ENCODE measurements at regions of chr10 and their contacts with region 1.

Region 1: DNA sequence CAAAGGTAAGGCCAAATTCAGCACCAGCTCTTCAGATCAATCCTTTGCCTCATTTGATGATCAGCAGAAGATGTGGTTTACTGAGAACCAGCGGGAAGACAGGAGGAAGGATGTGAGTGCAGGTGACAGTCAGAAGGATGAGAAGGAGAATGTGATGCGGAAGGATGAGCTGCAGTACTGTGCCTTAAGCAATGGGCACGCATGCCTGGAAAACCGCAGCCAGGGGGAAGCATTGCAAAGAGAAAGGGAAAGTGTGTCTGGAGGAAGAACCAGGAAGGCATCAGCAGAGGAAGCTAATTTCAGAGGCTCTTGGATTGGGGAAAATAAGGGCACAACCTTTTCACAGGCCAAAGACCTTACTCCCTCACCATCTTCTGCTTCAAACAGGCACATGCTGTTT is 25.7 kb downstream of the C10orf71 start:
- DNase-seq: peak in 2 of 3 donors; percentile 59 to 71
- H3K4me3 ChIP-seq: no peak overlapping the region
- H3K4me3 Mint-ChIP-seq: peak overlapping the region in 1 of 2 donors; percentile 1
- H3K27ac ChIP-seq: peak overlapping the region in 1 of 2 donors; percentile 7
- H3K27ac Mint-ChIP-seq: peak overlapping the region in 2 of 7 donors; percentile 0 to 10
- H3K4me1 ChIP-seq: peaks cover 20 to 41% of the 10 kb centered on the region in 2 donors
- H3K4me1 Mint-ChIP-seq: peaks cover 43% of the 10 kb centered on the region
- H3K27me3 ChIP-seq: no peaks in the 10 kb centered on the region
- H3K27me3 Mint-ChIP-seq: peaks cover 2 to 17% (median 4%) of the 10 kb centered on the region in 3 donors
- CTCF ChIP-seq: no peak

Region 2: DNA sequence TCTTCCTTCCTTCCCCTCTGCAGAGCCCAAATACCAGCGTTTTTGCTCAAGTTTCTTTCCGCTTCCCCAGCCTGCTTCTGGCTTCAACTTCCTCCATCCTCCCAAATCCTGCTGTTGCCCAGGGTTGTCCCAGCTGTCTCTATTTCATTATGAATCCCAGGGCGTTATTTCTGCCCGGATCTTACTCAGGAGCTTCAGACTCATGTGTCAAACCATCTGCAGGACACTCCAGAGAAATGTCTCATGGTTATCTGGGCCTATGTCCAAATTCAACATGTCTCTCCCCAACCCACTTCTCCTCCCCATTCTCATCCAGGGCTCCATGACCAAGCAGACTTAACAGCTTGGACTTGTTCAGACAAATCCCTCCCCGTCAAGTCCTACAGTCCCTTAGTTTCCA is 735.4 kb before region 1 on chr10:
- intact Hi-C with region 1: no loop called
- DNase-seq: no peak
- H3K4me3 ChIP-seq: no peak overlapping the region
- H3K4me3 Mint-ChIP-seq: no peak overlapping the region
- H3K27ac ChIP-seq: no peak overlapping the region
- H3K27ac Mint-ChIP-seq: peak overlapping the region in 1 of 7 donors; percentile 10
- H3K4me1 ChIP-seq: peaks cover 0 to 13% of the 10 kb centered on the region in 2 donors
- H3K4me1 Mint-ChIP-seq: peaks cover 6% of the 10 kb centered on the region
- H3K27me3 ChIP-seq: no peaks in the 10 kb centered on the region
- H3K27me3 Mint-ChIP-seq: peaks cover 2 to 4% (median 3%) of the 10 kb centered on the region in 3 donors
- CTCF ChIP-seq: no peak

Region 3: DNA sequence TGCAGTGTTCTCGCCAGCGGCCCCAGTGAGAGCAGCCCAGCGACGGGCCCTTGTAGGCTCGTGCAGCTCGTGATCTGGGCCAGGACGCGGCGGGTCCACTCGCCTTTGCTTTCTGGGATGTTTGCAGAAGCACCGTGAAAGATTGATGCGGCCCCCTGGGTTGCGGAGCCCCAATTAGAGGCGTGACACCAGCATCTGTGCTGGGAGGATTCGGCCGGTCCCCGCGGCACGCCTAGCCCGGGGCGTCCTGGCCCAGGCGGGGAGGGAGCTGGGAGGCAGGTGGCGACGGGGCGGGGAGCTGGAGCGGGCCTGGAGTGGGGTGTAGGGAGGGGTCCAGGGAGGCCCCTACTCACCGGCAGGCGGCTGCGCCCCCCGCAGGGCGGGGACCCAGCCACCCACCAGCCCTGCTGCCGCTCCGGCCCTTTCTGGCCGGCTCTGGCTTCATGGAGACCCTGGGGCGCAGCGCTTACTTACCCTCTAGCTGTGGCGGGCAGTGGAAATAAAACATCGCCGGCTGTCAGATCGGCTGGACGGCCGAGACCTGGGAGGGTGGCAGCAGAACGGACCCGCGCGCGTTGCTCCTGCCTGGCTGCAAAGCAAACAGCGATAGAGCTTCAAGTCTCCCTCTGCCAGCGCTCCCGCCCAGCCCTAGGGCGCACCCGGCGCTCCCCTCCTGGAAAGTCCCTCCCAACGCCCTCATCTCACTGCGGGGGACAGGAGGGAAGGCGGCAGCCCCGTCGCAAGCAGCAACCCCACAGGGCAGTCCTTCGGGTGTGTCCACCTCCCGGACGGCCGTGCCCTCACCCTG is 70.4 kb after region 1 on chr10:
- intact Hi-C with region 1: loop called in 1 of 2 experiments (anchors 5 kb)
- DNase-seq: no peak
- H3K4me3 ChIP-seq: no peak overlapping the region
- H3K4me3 Mint-ChIP-seq: peak overlapping the region in 1 of 2 donors; percentile 83
- H3K27ac ChIP-seq: no peak overlapping the region
- H3K27ac Mint-ChIP-seq: no peak overlapping the region
- H3K4me1 ChIP-seq: peaks cover 12 to 16% of the 10 kb centered on the region in 2 donors
- H3K4me1 Mint-ChIP-seq: peaks cover 19% of the 10 kb centered on the region
- H3K27me3 ChIP-seq: peaks cover 78 to 97% of the 10 kb centered on the region in 2 donors
- H3K27me3 Mint-ChIP-seq: peaks cover 79 to 98% (median 87%) of the 10 kb centered on the region in 3 donors
- CTCF ChIP-seq: no peak

Measured in CD14-positive monocyte (primary cell).